Endothelial cell of umbilical vein (primary cell): ENCODE measurements at regions of chr2 and their contacts with region 1.

Region 1: DNA sequence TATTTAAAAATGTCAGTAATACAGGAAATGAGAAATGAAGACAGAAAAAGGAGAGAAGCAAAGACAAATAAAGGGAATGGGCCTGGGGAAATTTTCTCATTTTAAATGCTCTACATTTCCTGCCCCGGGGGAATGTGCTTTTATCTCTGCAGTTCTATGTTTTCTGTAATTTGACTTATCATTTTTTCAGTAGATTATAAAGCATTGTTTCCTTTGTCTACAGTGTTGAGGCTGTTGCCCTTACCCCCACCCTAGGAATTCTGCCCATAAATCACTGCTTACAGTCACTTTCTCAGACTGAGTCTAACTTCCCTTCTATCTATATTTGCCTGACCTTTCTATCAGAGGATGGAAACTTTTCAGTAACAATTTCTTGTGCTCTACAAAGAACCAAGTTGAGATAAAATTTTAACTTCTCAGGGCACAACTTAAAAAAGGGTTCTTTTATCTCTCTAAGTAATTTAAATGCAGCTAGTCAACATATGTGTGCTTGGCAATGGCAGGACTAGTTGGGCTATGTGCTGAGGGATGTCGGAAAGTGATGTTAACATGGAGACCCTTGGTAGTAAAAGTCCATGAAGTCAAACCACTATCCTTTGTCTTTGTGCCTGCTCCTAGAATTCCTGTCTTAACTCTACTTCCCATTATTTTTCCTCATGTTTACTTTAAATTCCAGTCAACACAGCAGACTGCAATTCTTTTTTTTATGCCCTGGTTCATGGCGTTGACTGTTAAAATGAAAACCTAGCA is 146.5 kb upstream of the MMADHC start:
- DNase-seq: peak; percentile 94
- H3K4me3 ChIP-seq: no peak overlapping the region
- H3K27ac ChIP-seq: peak overlapping the region; percentile 97
- H3K4me1 ChIP-seq: peaks cover 39% of the 10 kb centered on the region
- H3K27me3 ChIP-seq: no peaks in the 10 kb centered on the region
- CTCF ChIP-seq: no peak
- POLR2A ChIP-seq: no peak

Region 2: DNA sequence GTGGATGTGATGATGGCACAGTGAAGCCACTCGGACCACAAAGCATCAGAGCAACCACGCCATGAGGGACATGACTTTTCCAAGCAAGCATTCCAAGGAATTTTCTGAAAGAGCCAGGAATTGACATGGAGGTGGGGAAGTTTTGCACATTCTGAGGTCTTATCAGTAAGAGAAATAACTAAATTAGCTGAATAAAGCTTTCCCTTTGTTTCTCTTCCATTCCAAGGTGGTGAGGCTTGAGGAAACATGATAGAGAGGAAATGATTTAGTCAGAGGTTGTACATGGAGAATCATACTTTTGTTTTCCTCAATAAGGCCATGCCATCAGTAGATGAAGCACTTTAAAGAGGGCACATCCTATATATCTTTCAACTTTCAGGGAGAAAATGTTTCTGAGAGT is 30.8 kb before region 1 on chr2:
- CTCF ChIA-PET with region 1: interaction called, 3 read pairs
- POLR2A ChIA-PET with region 1: no interaction called
- dilution Hi-C with region 1: no loop called
- intact Hi-C with region 1: loop called (anchors 2 kb)
- DNase-seq: peak; percentile 78
- H3K4me3 ChIP-seq: no peak overlapping the region
- H3K27ac ChIP-seq: peak overlapping the region; percentile 69
- H3K4me1 ChIP-seq: peaks cover 18% of the 10 kb centered on the region
- H3K27me3 ChIP-seq: no peaks in the 10 kb centered on the region
- CTCF ChIP-seq: no peak
- POLR2A ChIP-seq: no peak

Region 3: GRCh38 chr2:149782572-149782971 is 48.5 kb after region 1 on chr2:
- CTCF ChIA-PET with region 1: no interaction called
- POLR2A ChIA-PET with region 1: no interaction called
- dilution Hi-C with region 1: no loop called
- intact Hi-C with region 1: no loop called
- DNase-seq: no peak
- H3K4me3 ChIP-seq: no peak overlapping the region
- H3K27ac ChIP-seq: no peak overlapping the region
- H3K4me1 ChIP-seq: no peaks in the 10 kb centered on the region
- H3K27me3 ChIP-seq: no peaks in the 10 kb centered on the region
- CTCF ChIP-seq: no peak
- POLR2A ChIP-seq: no peak

Region 4: GRCh38 chr2:149860276-149860921 is 126.3 kb after region 1 on chr2:
- CTCF ChIA-PET with region 1: interaction called, 3 read pairs
- POLR2A ChIA-PET with region 1: no interaction called
- dilution Hi-C with region 1: no loop called
- intact Hi-C with region 1: loop called (anchors 5 kb)
- DNase-seq: peak; percentile 75
- H3K4me3 ChIP-seq: no peak overlapping the region
- H3K27ac ChIP-seq: peak overlapping the region; percentile 11
- H3K4me1 ChIP-seq: peaks cover 36% of the 10 kb centered on the region
- H3K27me3 ChIP-seq: no peaks in the 10 kb centered on the region
- CTCF ChIP-seq: no peak
- POLR2A ChIP-seq: no peak

Region 5: GRCh38 chr2:149994057-149994753 is 260.1 kb after region 1 on chr2:
- CTCF ChIA-PET with region 1: no interaction called
- POLR2A ChIA-PET with region 1: no interaction called
- dilution Hi-C with region 1: no loop called
- intact Hi-C with region 1: no loop called
- DNase-seq: no peak
- H3K4me3 ChIP-seq: no peak overlapping the region
- H3K27ac ChIP-seq: no peak overlapping the region
- H3K4me1 ChIP-seq: peaks cover 14% of the 10 kb centered on the region
- H3K27me3 ChIP-seq: no peaks in the 10 kb centered on the region
- CTCF ChIP-seq: no peak
- POLR2A ChIP-seq: no peak

Region 6: GRCh38 chr2:150133623-150134022 is 399.5 kb after region 1 on chr2:
- CTCF ChIA-PET with region 1: no interaction called
- POLR2A ChIA-PET with region 1: no interaction called
- dilution Hi-C with region 1: no loop called
- intact Hi-C with region 1: loop called (anchors 2 kb)
- DNase-seq: peak; percentile 97
- H3K4me3 ChIP-seq: no peak overlapping the region
- H3K27ac ChIP-seq: peak overlapping the region; percentile 90
- H3K4me1 ChIP-seq: peaks cover 17% of the 10 kb centered on the region
- H3K27me3 ChIP-seq: no peaks in the 10 kb centered on the region
- CTCF ChIP-seq: no peak
- POLR2A ChIP-seq: peak; percentile 38

Region 7: DNA sequence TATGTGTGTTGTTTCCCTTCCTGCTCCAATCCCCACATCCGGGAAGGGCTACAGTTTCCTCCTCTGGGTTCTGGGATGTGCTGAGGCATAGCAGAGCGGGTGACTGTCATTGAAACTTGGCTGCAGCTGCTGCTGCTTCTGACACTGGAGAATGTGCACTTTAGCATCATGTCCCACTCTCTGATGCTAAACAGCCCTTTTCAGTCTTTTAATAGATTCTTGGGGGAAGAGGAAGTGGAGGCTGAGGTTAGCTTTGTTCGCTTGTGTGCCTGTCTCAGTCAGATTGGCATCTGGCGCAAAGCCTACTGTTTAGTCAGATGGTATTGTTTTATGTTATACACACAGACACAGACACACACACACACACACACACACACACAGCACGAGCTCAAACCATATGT is 889.9 kb after region 1 on chr2:
- CTCF ChIA-PET with region 1: no interaction called
- POLR2A ChIA-PET with region 1: no interaction called
- dilution Hi-C with region 1: no loop called
- intact Hi-C with region 1: loop called (anchors 10 kb)
- DNase-seq: peak; percentile 89
- H3K4me3 ChIP-seq: no peak overlapping the region
- H3K27ac ChIP-seq: peak overlapping the region; percentile 68
- H3K4me1 ChIP-seq: peaks cover 49% of the 10 kb centered on the region
- H3K27me3 ChIP-seq: no peaks in the 10 kb centered on the region
- CTCF ChIP-seq: no peak
- POLR2A ChIP-seq: no peak